Caco-2 (cell line): ENCODE measurements at regions of chr12 and their contacts with region 1.

Region 1: DNA sequence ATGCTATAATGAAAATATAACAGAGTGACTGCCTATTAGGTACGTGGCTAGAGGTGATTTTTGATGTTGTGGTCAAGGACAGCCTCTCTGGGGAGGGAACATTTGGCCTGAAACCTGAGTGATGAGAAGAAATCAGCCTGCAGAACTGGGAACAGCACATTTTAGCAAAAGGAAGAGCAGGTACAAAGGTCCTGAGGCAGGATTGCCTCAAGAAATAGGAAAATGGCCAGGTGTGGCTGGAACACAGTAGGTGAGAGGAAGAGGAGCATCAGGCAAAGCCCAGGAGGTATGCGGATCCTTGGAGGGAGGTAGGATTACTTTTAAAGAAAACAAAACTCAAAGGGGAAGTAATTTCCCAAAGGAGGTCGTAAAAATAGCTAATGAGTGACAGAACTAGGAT is 582.9 kb downstream of the MED13L start:
- DNase-seq: no peak
- H3K4me3 ChIP-seq: no peak overlapping the region
- H3K4me3 Mint-ChIP-seq: no peak overlapping the region
- H3K27ac Mint-ChIP-seq: no peak overlapping the region
- H3K4me1 ChIP-seq: no peaks in the 10 kb centered on the region
- H3K4me1 Mint-ChIP-seq: no peaks in the 10 kb centered on the region
- H3K27me3 ChIP-seq: no peaks in the 10 kb centered on the region
- H3K27me3 Mint-ChIP-seq: no peaks in the 10 kb centered on the region
- CTCF ChIP-seq: no peak

Region 2: GRCh38 chr12:115672506-115673080 is 22.0 kb before region 1 on chr12:
- CTCF ChIA-PET with region 1: interaction called, 10 read pairs
- POLR2A ChIA-PET with region 1: no interaction called
- intact Hi-C with region 1: no loop called
- DNase-seq: no peak
- H3K4me3 ChIP-seq: no peak overlapping the region
- H3K4me3 Mint-ChIP-seq: no peak overlapping the region
- H3K27ac Mint-ChIP-seq: no peak overlapping the region
- H3K4me1 ChIP-seq: no peaks in the 10 kb centered on the region
- H3K4me1 Mint-ChIP-seq: no peaks in the 10 kb centered on the region
- H3K27me3 ChIP-seq: no peaks in the 10 kb centered on the region; the same call in 1 of the 2 replicates
- H3K27me3 Mint-ChIP-seq: peaks cover 17% of the 10 kb centered on the region
- CTCF ChIP-seq: no peak

Region 3: DNA sequence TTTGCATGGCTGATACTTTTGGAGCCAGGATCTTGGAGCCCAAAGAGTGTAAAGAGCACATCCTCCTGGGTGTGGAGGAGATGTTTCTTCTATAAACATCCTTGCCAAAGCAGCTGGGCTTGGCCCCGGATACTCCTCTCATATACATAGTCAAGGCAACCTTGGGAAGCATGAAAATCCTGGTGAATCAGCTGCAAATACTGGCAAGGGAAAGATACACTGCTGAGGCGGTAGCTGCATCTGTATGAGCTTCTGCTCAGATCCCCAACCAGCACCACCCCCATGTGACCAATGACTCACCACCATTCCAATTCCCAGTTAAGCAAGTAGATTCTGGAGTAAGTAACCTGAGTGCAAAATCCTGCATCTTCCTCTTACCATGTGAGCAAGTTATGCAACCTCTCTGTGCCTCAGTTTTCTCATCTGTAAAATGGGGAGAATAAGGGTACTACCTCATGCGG is 15.6 kb after region 1 on chr12:
- CTCF ChIA-PET with region 1: no interaction called
- POLR2A ChIA-PET with region 1: no interaction called
- intact Hi-C with region 1: no loop called
- DNase-seq: no peak
- H3K4me3 ChIP-seq: no peak overlapping the region
- H3K4me3 Mint-ChIP-seq: no peak overlapping the region
- H3K27ac Mint-ChIP-seq: no peak overlapping the region
- H3K4me1 ChIP-seq: no peaks in the 10 kb centered on the region
- H3K4me1 Mint-ChIP-seq: no peaks in the 10 kb centered on the region
- H3K27me3 ChIP-seq: no peaks in the 10 kb centered on the region
- H3K27me3 Mint-ChIP-seq: peaks cover 11% of the 10 kb centered on the region
- CTCF ChIP-seq: no peak